Mammary epithelial cell (primary cell): ENCODE measurements at regions of chr17 and their contacts with region 1.

Region 1: GRCh38 chr17:34091975-34092374 is 163.1 kb upstream of the CCL2 start:
- DNase-seq: no peak
- H3K4me3 ChIP-seq: no peak overlapping the region
- H3K27ac ChIP-seq: no peak overlapping the region
- H3K4me1 ChIP-seq: no peaks in the 10 kb centered on the region
- H3K27me3 ChIP-seq: no peaks in the 10 kb centered on the region
- CTCF ChIP-seq: no peak

Region 2: GRCh38 chr17:33492731-33493265 is 599.2 kb before region 1 on chr17:
- CTCF ChIA-PET with region 1: no interaction called
- dilution Hi-C with region 1: no loop called
- in situ Hi-C with region 1: no loop called
- intact Hi-C with region 1: no loop called
- DNase-seq: no peak
- H3K4me3 ChIP-seq: no peak overlapping the region
- H3K27ac ChIP-seq: no peak overlapping the region
- H3K4me1 ChIP-seq: no peaks in the 10 kb centered on the region
- H3K27me3 ChIP-seq: no peaks in the 10 kb centered on the region
- CTCF ChIP-seq: no peak

Region 3: GRCh38 chr17:33981711-33982601 is 110.0 kb before region 1 on chr17:
- CTCF ChIA-PET with region 1: no interaction called
- dilution Hi-C with region 1: no loop called
- in situ Hi-C with region 1: no loop called
- intact Hi-C with region 1: no loop called
- DNase-seq: no peak
- H3K4me3 ChIP-seq: no peak overlapping the region
- H3K27ac ChIP-seq: no peak overlapping the region
- H3K4me1 ChIP-seq: no peaks in the 10 kb centered on the region
- H3K27me3 ChIP-seq: no peaks in the 10 kb centered on the region
- CTCF ChIP-seq: no peak

Region 4: DNA sequence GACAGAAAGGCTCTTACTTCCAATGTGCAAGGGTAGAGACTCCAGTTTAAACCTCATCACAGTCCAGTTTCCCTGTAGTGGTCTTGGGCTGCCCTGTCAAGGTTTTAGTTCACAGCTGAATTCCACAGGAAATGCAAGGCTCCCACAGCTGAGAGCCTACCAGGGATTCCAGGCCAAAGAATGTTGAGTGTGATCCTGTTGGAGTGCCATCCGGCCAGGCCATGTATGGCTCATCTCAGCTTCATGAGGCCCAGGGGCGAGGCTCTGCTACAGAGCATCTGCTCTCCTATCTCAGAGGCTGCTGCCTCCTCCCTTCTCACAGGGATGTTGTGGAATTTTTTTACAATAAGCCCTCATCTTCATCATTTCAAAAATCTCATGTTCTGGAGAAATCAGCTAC is 76.7 kb before region 1 on chr17:
- CTCF ChIA-PET with region 1: no interaction called
- dilution Hi-C with region 1: loop called (anchors 5 kb)
- in situ Hi-C with region 1: no loop called
- intact Hi-C with region 1: no loop called
- DNase-seq: no peak
- H3K4me3 ChIP-seq: no peak overlapping the region
- H3K27ac ChIP-seq: no peak overlapping the region
- H3K4me1 ChIP-seq: no peaks in the 10 kb centered on the region
- H3K27me3 ChIP-seq: no peaks in the 10 kb centered on the region
- CTCF ChIP-seq: no peak

Region 5: GRCh38 chr17:34386697-34387550 is 294.9 kb after region 1 on chr17:
- CTCF ChIA-PET with region 1: no interaction called
- dilution Hi-C with region 1: no loop called
- in situ Hi-C with region 1: no loop called
- intact Hi-C with region 1: no loop called
- DNase-seq: no peak
- H3K4me3 ChIP-seq: no peak overlapping the region
- H3K27ac ChIP-seq: no peak overlapping the region
- H3K4me1 ChIP-seq: no peaks in the 10 kb centered on the region
- H3K27me3 ChIP-seq: no peaks in the 10 kb centered on the region
- CTCF ChIP-seq: no peak

Region 6: DNA sequence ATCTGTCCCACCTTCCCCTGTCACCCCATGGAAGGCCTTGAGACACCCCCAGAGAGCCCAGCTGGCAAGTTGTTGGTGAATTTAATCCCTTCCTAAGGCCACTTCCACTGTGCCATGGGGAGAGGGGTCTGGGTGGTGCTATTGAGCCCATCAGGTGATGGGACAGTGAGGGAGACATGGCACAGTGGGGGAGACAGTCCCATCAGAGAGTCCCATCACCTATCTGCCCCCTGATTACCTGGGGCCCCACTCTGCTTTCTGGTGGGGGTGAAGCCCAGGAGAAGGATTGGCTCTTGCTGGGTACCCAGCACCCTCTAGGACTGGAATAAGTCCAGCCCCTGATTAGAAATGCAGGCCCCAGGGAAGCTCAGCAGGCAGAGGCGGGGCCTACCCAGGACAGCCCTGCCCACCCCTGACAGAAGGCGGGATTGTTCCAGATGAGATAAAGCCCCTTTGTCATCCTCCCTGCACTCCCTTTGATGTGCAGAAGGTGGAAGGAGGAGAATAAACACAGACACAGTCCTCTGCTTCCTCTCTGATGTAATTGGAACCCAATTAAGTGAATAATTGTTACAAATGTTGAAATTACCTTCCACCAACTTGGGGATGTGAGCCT is 506.3 kb after region 1 on chr17:
- CTCF ChIA-PET with region 1: no interaction called
- dilution Hi-C with region 1: no loop called
- in situ Hi-C with region 1: no loop called
- intact Hi-C with region 1: no loop called
- DNase-seq: no peak
- H3K4me3 ChIP-seq: no peak overlapping the region
- H3K27ac ChIP-seq: no peak overlapping the region
- H3K4me1 ChIP-seq: no peaks in the 10 kb centered on the region
- H3K27me3 ChIP-seq: no peaks in the 10 kb centered on the region
- CTCF ChIP-seq: no peak